ENCODE measurements at regions of chr19 and their contacts with region 1.

Region 1: DNA sequence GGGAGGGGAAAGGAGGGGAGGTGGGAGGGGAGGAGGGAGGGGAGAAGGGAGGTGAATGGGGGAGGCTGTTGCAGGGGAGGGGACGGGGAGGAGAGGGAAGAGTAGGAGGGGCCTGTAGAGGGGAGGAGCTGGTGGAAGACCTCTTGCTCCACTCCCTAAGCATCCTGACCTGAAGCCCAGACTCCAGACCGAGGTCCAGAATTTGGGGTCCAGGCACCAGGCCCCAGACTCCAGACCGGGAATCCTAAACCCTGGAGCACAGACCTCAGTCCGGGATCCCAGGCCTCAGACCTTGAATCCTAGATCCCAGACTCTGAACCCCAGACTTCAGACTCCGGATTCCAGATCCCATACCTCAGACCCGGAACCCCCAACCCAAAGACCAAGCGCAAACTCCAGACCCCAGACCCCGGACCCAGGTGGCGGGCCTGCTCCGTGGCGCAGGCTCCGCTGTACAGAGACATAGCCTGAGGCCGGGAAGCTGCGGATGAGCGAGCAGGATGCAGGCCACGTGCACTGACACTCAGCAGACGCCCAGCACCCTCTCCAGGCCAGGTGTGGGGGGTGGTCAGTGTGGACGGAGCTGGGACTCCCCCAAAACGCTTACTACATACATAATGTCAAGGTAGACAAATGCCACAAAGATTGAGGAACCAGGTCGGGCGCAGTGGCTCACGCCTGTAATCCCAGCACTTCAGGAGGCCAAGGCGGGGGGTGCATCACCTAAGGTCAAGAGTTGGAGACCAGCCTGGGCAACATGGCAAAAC is 710 bp upstream of the BTBD2 start:
- DNase-seq: peak; percentile 87
- H3K4me3 ChIP-seq: peak overlapping the region; percentile 37 to 50
- H3K27ac ChIP-seq: peak overlapping the region; percentile 48 to 89; a peak in 3 of 4 replicates
- H3K4me1 ChIP-seq: peaks cover 4 to 18% of the 10 kb centered on the region in 2 experiments; a peak in 2 of 4 replicates
- H3K27me3 ChIP-seq: no peaks in the 10 kb centered on the region
- CTCF ChIP-seq: no peak
- EP300 ChIP-seq: peak in 1 of 2 experiments; percentile 64; a peak in 2 of 4 replicates
- RAD21 ChIP-seq: no peak

Region 2: GRCh38 chr19:2032296-2032941 is 16.2 kb after region 1 on chr19:
- CTCF ChIA-PET with region 1: interaction called, 11 read pairs
- POLR2A ChIA-PET with region 1: no interaction called
- DNase-seq: peak; percentile 91
- H3K4me3 ChIP-seq: no peak overlapping the region
- H3K27ac ChIP-seq: peak overlapping the region; percentile 55 to 95
- H3K4me1 ChIP-seq: peaks cover 10 to 23% of the 10 kb centered on the region in 2 experiments; a peak in 3 of 4 replicates
- H3K27me3 ChIP-seq: no peaks in the 10 kb centered on the region
- CTCF ChIP-seq: no peak
- EP300 ChIP-seq: peak; percentile 46 to 49; a peak in 3 of 4 replicates
- RAD21 ChIP-seq: peak; percentile 19; the same call in 1 of the 2 replicates

Region 3: DNA sequence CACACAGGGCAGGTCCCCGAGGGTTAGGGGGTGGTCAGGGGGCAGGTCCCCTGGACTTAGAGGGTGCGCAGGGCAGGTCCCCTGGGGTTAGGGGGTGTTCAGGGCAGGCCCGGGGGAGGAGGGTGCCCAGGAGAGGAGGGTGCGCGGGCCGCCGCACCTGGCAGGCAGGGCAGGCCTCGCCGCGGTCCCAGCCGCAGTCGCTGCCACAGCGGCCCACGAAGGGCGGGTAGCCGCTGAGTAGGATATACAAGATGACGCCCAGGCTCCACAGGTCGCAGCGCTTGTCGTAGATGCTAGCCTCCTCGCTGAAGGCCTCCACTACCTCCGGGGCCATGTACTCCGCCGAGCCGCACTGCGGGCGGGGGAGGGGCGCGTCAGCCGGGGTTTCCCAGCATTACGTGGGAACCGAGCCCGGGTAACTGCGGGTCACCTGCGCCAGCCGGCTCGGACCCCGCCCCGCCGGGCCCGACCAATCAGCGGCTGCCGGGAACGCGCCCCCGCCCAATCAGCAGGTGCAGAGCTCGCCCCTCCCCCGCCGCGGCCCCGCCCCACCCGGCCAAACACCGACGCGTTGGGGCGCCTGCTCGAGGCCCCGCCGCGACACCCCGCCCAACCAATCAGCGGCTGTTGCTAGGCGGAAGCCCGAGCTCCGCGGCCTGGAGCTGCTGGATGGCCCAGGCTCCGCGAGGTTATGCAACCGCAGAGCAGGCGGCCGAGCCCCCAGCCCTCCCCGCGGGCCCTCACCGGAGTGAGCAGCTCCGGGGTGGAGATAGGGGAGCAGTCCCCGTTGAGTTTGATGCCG is 25.7 kb after region 1 on chr19:
- CTCF ChIA-PET with region 1: interaction called, 11 read pairs
- POLR2A ChIA-PET with region 1: interaction called, 5 read pairs
- DNase-seq: peak; percentile 99
- H3K4me3 ChIP-seq: peak overlapping the region in 1 of 2 experiments; percentile 37; a peak in 2 of 4 replicates
- H3K27ac ChIP-seq: peak overlapping the region; percentile 40 to 95; a peak in 3 of 4 replicates
- H3K4me1 ChIP-seq: peaks cover 8 to 42% of the 10 kb centered on the region in 2 experiments; a peak in 3 of 4 replicates
- H3K27me3 ChIP-seq: no peaks in the 10 kb centered on the region
- CTCF ChIP-seq: no peak
- EP300 ChIP-seq: peak; percentile 24 to 72; a peak in 2 of 4 replicates
- RAD21 ChIP-seq: no peak

Region 4: DNA sequence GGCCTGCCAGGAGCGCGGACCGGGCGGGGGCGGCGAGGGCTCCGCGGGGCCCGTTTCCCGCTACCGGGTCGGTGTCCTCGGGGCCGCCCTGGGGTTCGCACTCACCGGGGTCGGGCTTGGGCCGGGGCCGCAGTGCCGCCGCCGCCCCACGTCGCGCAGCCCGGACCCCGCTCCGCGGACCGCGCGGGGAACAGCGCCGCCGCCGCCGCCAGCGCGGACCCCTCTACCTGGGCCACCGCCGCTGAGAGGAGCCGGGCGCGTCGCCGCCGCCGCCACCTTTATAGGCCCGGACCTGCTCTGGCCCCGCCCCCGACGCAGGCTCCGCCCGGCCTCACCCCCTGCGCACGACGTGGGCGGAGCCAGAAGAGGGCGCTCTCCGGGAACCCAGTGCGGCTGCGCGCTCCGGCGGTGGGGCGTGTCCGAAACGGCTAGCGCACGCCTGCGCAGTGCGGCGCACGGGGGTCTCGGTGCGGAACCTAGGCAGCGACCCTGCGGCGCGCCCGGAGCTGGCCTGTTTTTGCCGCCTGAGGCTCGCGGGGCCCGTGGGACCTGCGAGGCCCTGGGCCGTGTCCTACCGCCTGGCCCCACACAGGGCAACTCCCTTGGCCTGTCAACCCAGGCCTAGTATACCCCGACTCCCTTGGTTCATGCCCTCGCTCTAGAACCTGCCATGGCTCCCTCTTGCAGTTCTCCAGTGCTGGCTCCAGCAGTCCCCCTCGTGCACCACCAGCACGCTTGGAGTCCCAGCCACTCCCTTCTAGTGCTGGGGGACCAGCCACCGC is 35.0 kb after region 1 on chr19 and contains the start of gene MKNK2:
- CTCF ChIA-PET with region 1: interaction called, 16 read pairs
- POLR2A ChIA-PET with region 1: interaction called, 5 read pairs
- DNase-seq: peak; percentile 99
- H3K4me3 ChIP-seq: peak within 1 kb of the TSS; percentile 90 to 94
- H3K27ac ChIP-seq: peak within 1 kb of the TSS; percentile 37 to 88; a peak in 3 of 4 replicates
- H3K4me1 ChIP-seq: peaks cover 29 to 57% of the 10 kb centered on the region in 2 experiments; a peak in 3 of 4 replicates
- H3K27me3 ChIP-seq: no peaks in the 10 kb centered on the region
- CTCF ChIP-seq: peak; percentile 40
- EP300 ChIP-seq: no peak
- RAD21 ChIP-seq: no peak
- polyA plus RNA-seq, gene MKNK2: 58.9 and 65.4 TPM in 2 replicates

Measured in SK-N-SH (cell line).